Naive thymus-derived CD4-positive, alpha-beta T cell (primary cell): ENCODE measurements at regions of chr2 and their contacts with region 1.

Region 1: GRCh38 chr2:230614913-230615332 is 97.7 kb upstream of the CAB39 start:
- DNase-seq: peak in 2 of 9 donors; percentile 9 to 61
- ATAC-seq: peak; percentile 41
- H3K4me3 ChIP-seq: no peak overlapping the region
- H3K4me3 Mint-ChIP-seq: peak overlapping the region in 1 of 10 donors; percentile 40
- H3K27ac ChIP-seq: no peak overlapping the region
- H3K27ac Mint-ChIP-seq: peak overlapping the region in 1 of 9 donors; percentile 78
- H3K4me1 ChIP-seq: peaks cover 0 to 5% of the 10 kb centered on the region in 2 donors
- H3K4me1 Mint-ChIP-seq: peaks cover 11 to 60% (median 27%) of the 10 kb centered on the region in 7 donors
- H3K27me3 ChIP-seq: no peaks in the 10 kb centered on the region
- H3K27me3 Mint-ChIP-seq: no peaks in the 10 kb centered on the region

Region 2: GRCh38 chr2:230007931-230008707 is 606.8 kb before region 1 on chr2:
- CTCF ChIA-PET with region 1: interaction called, 3 read pairs
- POLR2A ChIA-PET with region 1: no interaction called
- intact Hi-C with region 1: loop called (anchors 1 kb)
- DNase-seq: peak; percentile 53 to 83 (median 72)
- ATAC-seq: peak; percentile 80
- H3K4me3 ChIP-seq: no peak overlapping the region
- H3K4me3 Mint-ChIP-seq: peak overlapping the region in 9 of 10 donors; percentile 25 to 71 (median 62)
- H3K27ac ChIP-seq: no peak overlapping the region
- H3K27ac Mint-ChIP-seq: peak overlapping the region in 1 of 9 donors; percentile 0
- H3K4me1 ChIP-seq: no peaks in the 10 kb centered on the region
- H3K4me1 Mint-ChIP-seq: peaks cover 5 to 11% (median 7%) of the 10 kb centered on the region in 7 donors
- H3K27me3 ChIP-seq: no peaks in the 10 kb centered on the region
- H3K27me3 Mint-ChIP-seq: no peaks in the 10 kb centered on the region

Region 3: GRCh38 chr2:230160112-230160660 is 454.7 kb before region 1 on chr2:
- CTCF ChIA-PET with region 1: no interaction called
- POLR2A ChIA-PET with region 1: no interaction called
- intact Hi-C with region 1: loop called in 1 of 2 experiments (anchors 2 kb)
- DNase-seq: peak; percentile 15 to 60 (median 52)
- ATAC-seq: peak; percentile 82
- H3K4me3 ChIP-seq: no peak overlapping the region
- H3K4me3 Mint-ChIP-seq: peak overlapping the region in 7 of 10 donors; percentile 35 to 68 (median 44)
- H3K27ac ChIP-seq: no peak overlapping the region
- H3K27ac Mint-ChIP-seq: peak overlapping the region in 2 of 9 donors; percentile 33 to 34
- H3K4me1 ChIP-seq: no peaks in the 10 kb centered on the region
- H3K4me1 Mint-ChIP-seq: peaks cover 6 to 11% (median 6%) of the 10 kb centered on the region in 7 donors
- H3K27me3 ChIP-seq: no peaks in the 10 kb centered on the region
- H3K27me3 Mint-ChIP-seq: no peaks in the 10 kb centered on the region

Region 4: GRCh38 chr2:230202430-230203109 is 412.4 kb before region 1 on chr2:
- CTCF ChIA-PET with region 1: interaction called, 3 read pairs
- POLR2A ChIA-PET with region 1: no interaction called
- intact Hi-C with region 1: loop called in 1 of 2 experiments (anchors 5 kb)
- DNase-seq: no peak
- ATAC-seq: no peak
- H3K4me3 ChIP-seq: no peak overlapping the region
- H3K4me3 Mint-ChIP-seq: peak overlapping the region in 1 of 10 donors; percentile 5
- H3K27ac ChIP-seq: no peak overlapping the region
- H3K27ac Mint-ChIP-seq: peak overlapping the region; percentile 9 to 89 (median 34)
- H3K4me1 ChIP-seq: no peaks in the 10 kb centered on the region
- H3K4me1 Mint-ChIP-seq: peaks cover 5 to 25% (median 12%) of the 10 kb centered on the region in 7 donors
- H3K27me3 ChIP-seq: no peaks in the 10 kb centered on the region
- H3K27me3 Mint-ChIP-seq: no peaks in the 10 kb centered on the region

Region 5: DNA sequence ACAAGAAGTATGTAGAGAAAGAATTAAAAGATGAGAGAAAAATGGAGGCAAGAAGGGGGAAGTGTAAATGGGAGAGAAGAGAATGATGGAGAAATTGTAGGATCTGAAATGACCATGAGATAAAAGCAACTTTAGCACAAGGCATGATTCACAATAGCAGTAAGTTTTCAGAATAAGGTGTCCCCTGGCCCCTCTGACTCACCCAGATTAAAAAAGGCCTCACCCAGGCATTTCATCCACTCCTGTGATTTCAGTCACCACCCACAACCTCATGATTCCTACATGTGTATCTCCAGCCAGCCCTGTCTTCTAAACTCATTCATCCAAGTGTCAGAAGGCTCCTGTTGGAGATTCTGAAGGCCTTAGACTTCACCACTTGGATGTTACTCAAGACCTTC is 142.3 kb before region 1 on chr2:
- CTCF ChIA-PET with region 1: no interaction called
- POLR2A ChIA-PET with region 1: no interaction called
- intact Hi-C with region 1: loop called (anchors 2 to 5 kb)
- DNase-seq: peak in 1 of 9 donors; percentile 39
- ATAC-seq: peak; percentile 74
- H3K4me3 ChIP-seq: no peak overlapping the region
- H3K4me3 Mint-ChIP-seq: peak overlapping the region in 8 of 10 donors; percentile 12 to 62 (median 30)
- H3K27ac ChIP-seq: peak overlapping the region; percentile 48
- H3K27ac Mint-ChIP-seq: peak overlapping the region; percentile 45 to 92 (median 83)
- H3K4me1 ChIP-seq: peaks cover 10 to 24% of the 10 kb centered on the region in 2 donors
- H3K4me1 Mint-ChIP-seq: peaks cover 22 to 60% (median 52%) of the 10 kb centered on the region in 7 donors
- H3K27me3 ChIP-seq: no peaks in the 10 kb centered on the region
- H3K27me3 Mint-ChIP-seq: no peaks in the 10 kb centered on the region

Region 6: DNA sequence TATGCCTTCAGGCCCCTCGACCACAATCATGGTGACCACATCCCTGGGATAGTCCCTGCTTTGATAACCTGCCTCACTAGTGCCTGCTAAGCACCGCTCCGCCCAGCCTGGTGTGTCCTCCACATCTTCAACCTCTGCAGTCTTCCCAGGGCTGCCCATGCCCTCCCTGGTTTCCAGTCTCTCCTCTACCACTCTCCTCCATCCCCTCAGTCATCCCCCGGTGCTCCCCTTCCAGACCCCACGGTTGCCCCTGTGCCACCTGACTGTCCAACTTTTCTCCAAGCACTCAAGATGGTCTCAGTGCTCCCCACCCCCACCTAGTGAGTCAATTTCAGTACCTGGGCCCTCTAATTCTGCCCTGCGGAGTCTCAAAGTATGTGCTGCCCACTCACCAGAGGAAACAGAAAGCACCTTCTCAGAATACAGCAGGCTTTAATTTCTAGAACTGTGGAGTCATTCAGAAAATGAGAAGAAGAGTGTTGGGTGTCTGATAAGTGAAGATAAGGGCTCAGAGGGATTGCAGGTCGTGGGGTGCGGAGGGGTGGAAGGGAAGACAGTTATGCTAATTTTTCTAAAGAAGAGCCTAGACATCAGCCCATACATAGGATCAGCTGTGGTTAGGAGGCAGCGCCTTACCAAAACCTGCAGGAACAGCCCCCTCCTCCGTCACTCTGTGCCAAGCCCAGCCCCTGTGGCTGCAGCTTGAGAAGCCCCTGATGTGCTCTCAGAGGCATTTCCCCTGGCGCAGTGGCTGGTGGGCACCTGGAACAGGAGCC is 44.1 kb after region 1 on chr2:
- CTCF ChIA-PET with region 1: no interaction called
- POLR2A ChIA-PET with region 1: no interaction called
- intact Hi-C with region 1: loop called in 1 of 2 experiments (anchors 1 kb)
- DNase-seq: peak in 5 of 9 donors; percentile 17 to 69 (median 28)
- ATAC-seq: peak; percentile 47
- H3K4me3 ChIP-seq: no peak overlapping the region
- H3K4me3 Mint-ChIP-seq: peak overlapping the region; percentile 42 to 92 (median 74)
- H3K27ac ChIP-seq: peak overlapping the region; percentile 48
- H3K27ac Mint-ChIP-seq: peak overlapping the region; percentile 63 to 98 (median 84)
- H3K4me1 ChIP-seq: peaks cover 62 to 64% of the 10 kb centered on the region in 2 donors
- H3K4me1 Mint-ChIP-seq: peaks cover 62 to 88% (median 87%) of the 10 kb centered on the region in 7 donors
- H3K27me3 ChIP-seq: no peaks in the 10 kb centered on the region
- H3K27me3 Mint-ChIP-seq: no peaks in the 10 kb centered on the region

Region 7: DNA sequence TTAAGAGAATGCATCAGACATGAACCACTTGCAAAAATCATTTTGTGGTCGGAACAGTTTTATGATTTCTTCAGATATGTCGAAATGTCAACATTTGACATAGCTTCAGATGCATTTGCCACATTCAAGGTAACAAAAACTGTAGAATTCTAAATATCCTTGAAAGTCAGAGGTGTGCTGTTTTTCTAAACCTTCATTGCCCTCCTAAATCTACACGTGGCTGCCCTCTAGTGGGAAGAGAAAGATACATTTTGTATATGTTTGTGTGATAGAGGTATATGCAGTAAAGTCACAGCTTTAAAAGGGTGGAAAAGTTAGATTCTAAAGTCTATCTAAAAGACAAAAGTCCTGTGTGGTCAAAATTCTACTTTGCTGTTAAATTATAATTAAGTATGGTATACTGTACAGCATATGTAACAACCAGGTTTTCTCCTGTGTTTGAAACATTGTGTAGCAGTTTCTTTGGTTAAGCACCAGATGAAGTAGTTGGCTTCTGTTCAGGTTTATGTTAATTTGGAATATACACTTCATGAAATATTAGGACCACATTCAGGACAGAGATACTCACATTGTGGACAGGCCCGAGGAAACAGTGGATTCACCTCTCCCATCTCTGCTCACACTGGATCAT is 184.0 kb after region 1 on chr2:
- CTCF ChIA-PET with region 1: interaction called, 9 read pairs
- POLR2A ChIA-PET with region 1: no interaction called
- intact Hi-C with region 1: loop called (anchors 1 kb)
- DNase-seq: peak in 7 of 9 donors; percentile 44 to 76 (median 69)
- ATAC-seq: peak; percentile 58
- H3K4me3 ChIP-seq: no peak overlapping the region
- H3K4me3 Mint-ChIP-seq: peak overlapping the region in 3 of 10 donors; percentile 8 to 33 (median 15)
- H3K27ac ChIP-seq: no peak overlapping the region
- H3K27ac Mint-ChIP-seq: peak overlapping the region in 4 of 9 donors; percentile 59 to 76 (median 69)
- H3K4me1 ChIP-seq: peaks cover 30 to 41% of the 10 kb centered on the region in 2 donors
- H3K4me1 Mint-ChIP-seq: peaks cover 6 to 34% (median 26%) of the 10 kb centered on the region in 7 donors
- H3K27me3 ChIP-seq: no peaks in the 10 kb centered on the region
- H3K27me3 Mint-ChIP-seq: no peaks in the 10 kb centered on the region